AG04450 (cell line): ENCODE measurements at regions of chr19 and their contacts with region 1.

Region 1: DNA sequence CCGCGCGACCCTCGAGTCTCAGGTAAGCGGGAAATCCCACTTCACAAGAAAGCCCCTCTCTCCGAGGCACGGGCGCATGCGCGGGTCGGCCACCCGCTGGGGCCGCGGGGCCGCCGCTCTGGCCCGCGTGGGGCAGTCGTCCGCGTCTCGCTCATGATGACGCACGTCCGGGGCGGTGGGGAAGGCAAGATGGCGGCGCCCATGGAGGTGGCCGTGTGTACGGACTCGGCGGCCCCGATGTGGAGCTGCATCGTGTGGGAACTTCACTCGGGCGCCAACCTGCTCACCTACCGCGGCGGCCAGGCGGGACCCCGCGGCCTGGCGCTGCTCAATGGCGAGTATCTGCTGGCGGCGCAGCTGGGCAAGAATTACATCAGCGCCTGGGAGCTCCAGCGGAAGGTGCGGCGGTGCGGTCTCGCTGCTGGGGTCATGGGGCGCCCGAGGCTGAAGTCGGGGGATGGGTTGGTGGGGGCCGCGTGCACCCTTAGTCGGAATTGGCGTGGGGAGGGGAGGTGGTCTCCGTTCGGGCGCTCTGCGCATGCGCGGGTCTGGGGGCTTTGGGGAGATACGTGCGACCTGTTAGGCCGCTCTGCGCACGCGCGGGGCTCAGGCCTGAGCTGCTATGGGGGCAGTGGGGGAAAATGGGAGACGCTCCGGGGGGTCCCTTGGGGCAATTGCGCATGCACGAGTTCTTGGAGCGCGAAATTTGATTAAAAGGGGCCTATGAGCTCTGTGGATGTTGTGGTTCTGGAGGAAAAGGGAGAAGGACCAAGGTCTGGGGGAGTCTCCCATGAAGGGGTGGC is at the start of gene WDR18:
- DNase-seq: peak; percentile 49
- H3K4me3 ChIP-seq: peak within 1 kb of the TSS; percentile 98
- H3K27ac ChIP-seq: peak within 1 kb of the TSS; percentile 86
- H3K27me3 ChIP-seq: no peaks in the 10 kb centered on the region
- CTCF ChIP-seq: no peak
- polyA plus RNA-seq, gene WDR18: 24.5 and 36.3 TPM in 2 replicates

Region 2: DNA sequence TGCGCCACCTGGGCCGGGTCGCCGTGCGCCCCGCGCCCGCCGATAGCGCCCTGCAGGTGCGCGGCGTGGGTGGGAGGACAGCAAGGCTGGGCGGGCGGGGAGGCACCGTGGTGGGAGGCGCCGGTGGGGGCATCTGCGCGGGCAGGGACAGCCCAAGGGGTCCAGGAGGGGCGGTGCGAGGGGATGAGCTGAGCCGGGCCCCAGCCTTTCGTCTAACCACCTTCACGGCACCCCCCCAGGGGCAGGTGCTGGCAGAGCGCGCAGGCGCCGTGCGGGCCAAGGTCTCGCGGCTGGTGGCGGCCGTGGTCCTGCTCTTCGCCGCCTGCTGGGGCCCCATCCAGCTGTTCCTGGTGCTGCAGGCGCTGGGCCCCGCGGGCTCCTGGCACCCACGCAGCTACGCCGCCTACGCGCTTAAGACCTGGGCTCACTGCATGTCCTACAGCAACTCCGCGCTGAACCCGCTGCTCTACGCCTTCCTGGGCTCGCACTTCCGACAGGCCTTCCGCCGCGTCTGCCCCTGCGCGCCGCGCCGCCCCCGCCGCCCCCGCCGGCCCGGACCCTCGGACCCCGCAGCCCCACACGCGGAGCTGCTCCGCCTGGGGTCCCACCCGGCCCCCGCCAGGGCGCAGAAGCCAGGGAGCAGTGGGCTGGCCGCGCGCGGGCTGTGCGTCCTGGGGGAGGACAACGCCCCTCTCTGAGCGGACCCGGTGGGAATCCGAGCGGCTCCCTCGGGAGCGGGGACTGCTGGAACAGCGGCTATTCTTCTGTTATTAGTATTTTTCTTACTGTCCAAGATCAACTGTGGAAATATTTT is 64.1 kb before region 1 on chr19:
- CTCF ChIA-PET with region 1: interaction called, 26 read pairs
- POLR2A ChIA-PET with region 1: interaction called, 5 read pairs
- DNase-seq: no peak
- H3K4me3 ChIP-seq: no peak overlapping the region; the same call in 1 of the 2 replicates
- H3K27ac ChIP-seq: no peak overlapping the region
- H3K27me3 ChIP-seq: peaks cover 27% of the 10 kb centered on the region
- CTCF ChIP-seq: no peak

Region 3: GRCh38 chr19:933216-933882 is 51.0 kb before region 1 on chr19:
- CTCF ChIA-PET with region 1: interaction called, 3 read pairs
- POLR2A ChIA-PET with region 1: interaction called, 11 read pairs
- DNase-seq: peak; percentile 85
- H3K4me3 ChIP-seq: peak overlapping the region; percentile 41
- H3K27ac ChIP-seq: peak overlapping the region; percentile 91
- H3K27me3 ChIP-seq: no peaks in the 10 kb centered on the region
- CTCF ChIP-seq: no peak